Posterior vena cava (tissue), 2 donors: ENCODE measurements at regions of chr12 and their contacts with region 1.

Region 1: DNA sequence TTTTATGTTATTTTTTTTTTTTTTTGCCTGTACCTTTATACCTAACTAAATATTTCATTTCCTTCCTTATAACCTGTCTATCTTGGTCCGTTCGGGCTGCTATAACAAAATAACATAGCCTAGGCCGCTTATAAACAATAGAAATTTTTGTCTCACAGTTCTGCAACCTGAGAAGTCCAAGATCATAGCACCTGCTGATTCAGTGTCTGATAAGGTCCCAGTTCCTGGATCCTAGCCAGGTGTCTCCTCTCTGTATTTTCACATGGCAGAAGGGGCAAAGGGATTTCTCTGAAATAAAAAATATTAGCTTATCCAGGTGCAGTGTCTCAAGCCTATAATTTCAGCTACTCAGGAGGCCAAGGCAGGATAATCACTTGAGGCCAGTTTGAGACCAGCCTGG is 1046.6 kb upstream of the USP15 start:
- DNase-seq: no peak

Region 2: DNA sequence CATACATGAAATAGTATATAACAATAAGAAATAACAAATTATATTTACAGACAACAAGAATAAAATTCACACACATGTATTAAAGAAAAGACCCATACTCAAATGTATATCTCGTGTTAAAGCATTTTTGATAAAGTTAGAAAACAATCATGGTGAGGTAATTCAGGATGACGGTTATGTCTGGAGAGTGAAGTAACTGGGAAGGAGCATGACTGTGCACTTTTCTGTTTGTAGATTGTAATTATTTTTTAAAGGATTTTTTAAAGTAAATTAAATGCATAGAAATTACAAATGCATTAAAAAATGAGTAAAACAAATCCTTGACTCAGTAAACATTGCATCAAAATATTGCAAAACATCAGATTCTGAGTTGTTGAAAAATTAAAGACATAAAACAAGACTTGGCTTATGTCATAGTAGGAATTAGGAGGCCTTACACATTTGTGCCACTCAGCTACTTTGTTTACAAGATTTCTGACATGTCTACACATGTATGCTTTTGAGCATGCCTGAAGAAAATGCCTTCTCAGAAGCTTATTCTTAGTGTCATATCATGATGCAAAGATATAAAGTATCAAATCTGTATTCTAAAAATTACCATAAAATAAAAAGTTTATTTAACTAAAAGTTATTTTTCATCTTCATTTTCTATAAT is 292.7 kb before region 1 on chr12:
- intact Hi-C with region 1: no loop called
- DNase-seq: no peak

Region 3: DNA sequence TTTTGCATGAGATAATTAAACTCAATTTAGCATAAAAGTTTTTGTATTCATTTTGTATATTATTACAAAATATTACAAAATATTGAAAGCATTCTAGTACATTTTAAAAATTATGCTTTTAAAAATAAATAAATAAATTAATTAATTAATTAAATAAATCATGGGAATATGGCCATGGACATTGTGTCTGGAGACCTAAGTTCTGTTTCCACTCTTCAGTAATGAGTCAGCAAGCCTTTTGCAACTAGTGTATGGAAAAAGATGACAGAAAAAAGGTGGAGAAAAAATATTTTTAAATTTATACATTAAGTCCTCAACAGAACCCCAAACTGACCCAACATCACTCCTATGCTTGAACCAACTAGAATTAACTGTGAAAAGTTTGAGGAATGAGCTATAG is 140.9 kb before region 1 on chr12:
- intact Hi-C with region 1: loop called in 1 of 2 experiments (anchors 5 kb)
- DNase-seq: no peak